ENCODE measurements at regions of chr15 and their contacts with region 1.

Region 1: GRCh38 chr15:65824031-65824743 is 32.1 kb upstream of the DENND4A start:
- DNase-seq: peak; percentile 71 to 76
- H3K4me3 ChIP-seq: no peak overlapping the region
- H3K4me3 Mint-ChIP-seq: no peak overlapping the region
- H3K27ac Mint-ChIP-seq: no peak overlapping the region
- H3K4me1 ChIP-seq: peaks cover 21% of the 10 kb centered on the region
- H3K4me1 Mint-ChIP-seq: peaks cover 25% of the 10 kb centered on the region
- H3K27me3 ChIP-seq: no peaks in the 10 kb centered on the region
- H3K27me3 Mint-ChIP-seq: no peaks in the 10 kb centered on the region
- CTCF ChIP-seq: peak; percentile 62 to 80

Region 2: DNA sequence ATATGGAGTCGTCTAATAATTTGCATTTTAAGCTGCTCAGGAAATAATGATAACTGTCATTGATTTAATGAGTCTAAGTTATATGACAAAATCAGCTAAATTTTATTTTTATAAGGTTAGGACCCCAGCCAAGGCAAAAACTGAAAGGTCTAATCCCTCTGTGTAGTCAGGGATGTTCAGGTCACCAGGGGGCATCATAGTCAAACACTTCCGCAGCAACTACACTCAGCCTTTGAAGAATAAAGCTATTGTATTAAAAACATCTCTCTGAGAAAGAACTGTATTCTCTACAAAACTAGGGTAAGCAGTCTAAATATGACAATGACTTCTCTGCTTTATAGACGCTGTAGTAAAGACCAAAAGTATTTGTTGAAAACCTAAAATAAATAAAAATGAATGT is 228.2 kb before region 1 on chr15:
- CTCF ChIA-PET with region 1: interaction called, 5 read pairs
- POLR2A ChIA-PET with region 1: no interaction called
- intact Hi-C with region 1: loop called (anchors 5 kb)
- DNase-seq: peak in 1 of 2 experiments; percentile 36
- H3K4me3 ChIP-seq: no peak overlapping the region
- H3K4me3 Mint-ChIP-seq: no peak overlapping the region
- H3K27ac Mint-ChIP-seq: no peak overlapping the region
- H3K4me1 ChIP-seq: no peaks in the 10 kb centered on the region
- H3K4me1 Mint-ChIP-seq: no peaks in the 10 kb centered on the region
- H3K27me3 ChIP-seq: no peaks in the 10 kb centered on the region
- H3K27me3 Mint-ChIP-seq: no peaks in the 10 kb centered on the region
- CTCF ChIP-seq: peak; percentile 42 to 56

Region 3: DNA sequence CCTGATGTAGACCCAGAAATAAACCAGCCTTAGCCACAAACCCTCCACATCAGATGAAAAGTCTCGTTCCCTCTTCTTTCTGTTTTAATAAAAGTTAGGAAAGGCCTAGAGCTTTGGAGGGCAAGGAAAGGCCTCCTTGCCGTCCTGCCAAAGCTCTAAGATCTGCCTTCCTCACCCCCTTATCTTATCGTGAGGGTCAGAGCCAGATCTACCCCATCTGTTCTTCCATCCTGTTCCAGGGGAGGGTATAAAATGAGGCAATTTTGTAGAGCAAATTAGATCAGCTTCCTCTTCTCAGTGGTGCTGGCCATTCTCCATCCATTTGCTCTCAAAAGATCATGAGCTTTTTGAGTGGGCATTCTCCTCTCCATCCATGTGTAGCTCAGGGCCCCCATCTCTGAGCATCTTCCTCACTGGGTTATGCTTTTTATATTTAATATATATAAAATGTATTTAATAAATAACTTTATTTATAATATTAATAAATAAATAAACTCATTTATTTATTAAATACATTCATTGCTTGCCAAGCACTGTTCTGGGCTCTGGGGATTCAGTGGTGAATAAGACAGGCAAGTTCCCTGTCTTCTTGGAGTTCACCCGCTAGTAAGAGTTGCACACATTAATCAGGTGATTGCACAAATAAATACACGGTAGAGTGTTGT is 204.4 kb before region 1 on chr15:
- CTCF ChIA-PET with region 1: no interaction called
- POLR2A ChIA-PET with region 1: no interaction called
- intact Hi-C with region 1: no loop called
- DNase-seq: no peak
- H3K4me3 ChIP-seq: no peak overlapping the region
- H3K4me3 Mint-ChIP-seq: no peak overlapping the region
- H3K27ac Mint-ChIP-seq: no peak overlapping the region
- H3K4me1 ChIP-seq: no peaks in the 10 kb centered on the region
- H3K4me1 Mint-ChIP-seq: no peaks in the 10 kb centered on the region
- H3K27me3 ChIP-seq: no peaks in the 10 kb centered on the region
- H3K27me3 Mint-ChIP-seq: no peaks in the 10 kb centered on the region
- CTCF ChIP-seq: no peak

Region 4: DNA sequence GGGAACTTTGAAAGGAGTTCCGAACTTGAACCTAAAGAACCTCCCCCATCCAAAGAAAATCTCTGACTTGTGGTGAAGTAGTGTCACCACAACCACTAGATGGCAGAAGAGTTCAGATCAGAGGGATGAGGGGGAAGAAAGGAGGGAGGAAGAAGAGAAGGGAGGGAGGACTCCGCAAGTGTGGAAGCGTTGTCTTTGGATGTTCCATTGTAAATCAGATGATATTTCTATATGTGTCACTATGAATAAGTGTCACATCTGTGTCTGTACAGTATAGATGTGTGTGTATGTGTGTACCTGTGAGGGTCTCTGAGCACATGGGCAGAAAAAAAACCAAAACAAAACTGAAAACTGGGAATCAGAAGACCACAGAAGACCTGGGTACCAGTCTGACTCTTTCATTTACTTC is 185.5 kb before region 1 on chr15:
- CTCF ChIA-PET with region 1: interaction called, 9 read pairs
- POLR2A ChIA-PET with region 1: no interaction called
- intact Hi-C with region 1: loop called (anchors 1 kb)
- DNase-seq: peak in 1 of 2 experiments; percentile 67
- H3K4me3 ChIP-seq: no peak overlapping the region
- H3K4me3 Mint-ChIP-seq: no peak overlapping the region
- H3K27ac Mint-ChIP-seq: no peak overlapping the region
- H3K4me1 ChIP-seq: no peaks in the 10 kb centered on the region
- H3K4me1 Mint-ChIP-seq: no peaks in the 10 kb centered on the region
- H3K27me3 ChIP-seq: no peaks in the 10 kb centered on the region
- H3K27me3 Mint-ChIP-seq: no peaks in the 10 kb centered on the region
- CTCF ChIP-seq: peak; percentile 74 to 78

Region 5: GRCh38 chr15:65792130-65792987 is 31.8 kb before region 1 on chr15 and contains the start of gene DENND4A:
- CTCF ChIA-PET with region 1: interaction called, 5 read pairs
- POLR2A ChIA-PET with region 1: no interaction called
- intact Hi-C with region 1: loop called (anchors 2 kb)
- DNase-seq: peak; percentile 97
- H3K4me3 ChIP-seq: peak within 1 kb of the TSS; percentile 74
- H3K4me3 Mint-ChIP-seq: peak within 1 kb of the TSS; percentile 95
- H3K27ac Mint-ChIP-seq: peak within 1 kb of the TSS; percentile 97
- H3K4me1 ChIP-seq: peaks cover 11% of the 10 kb centered on the region; the same call in 1 of the 2 replicates
- H3K4me1 Mint-ChIP-seq: peaks cover 16% of the 10 kb centered on the region
- H3K27me3 ChIP-seq: no peaks in the 10 kb centered on the region
- H3K27me3 Mint-ChIP-seq: no peaks in the 10 kb centered on the region
- CTCF ChIP-seq: no peak
- total RNA-seq, gene DENND4A: 12.7 and 12.9 TPM in 2 replicates